ENCODE measurements at regions of chr18 and their contacts with region 1.

Region 1: DNA sequence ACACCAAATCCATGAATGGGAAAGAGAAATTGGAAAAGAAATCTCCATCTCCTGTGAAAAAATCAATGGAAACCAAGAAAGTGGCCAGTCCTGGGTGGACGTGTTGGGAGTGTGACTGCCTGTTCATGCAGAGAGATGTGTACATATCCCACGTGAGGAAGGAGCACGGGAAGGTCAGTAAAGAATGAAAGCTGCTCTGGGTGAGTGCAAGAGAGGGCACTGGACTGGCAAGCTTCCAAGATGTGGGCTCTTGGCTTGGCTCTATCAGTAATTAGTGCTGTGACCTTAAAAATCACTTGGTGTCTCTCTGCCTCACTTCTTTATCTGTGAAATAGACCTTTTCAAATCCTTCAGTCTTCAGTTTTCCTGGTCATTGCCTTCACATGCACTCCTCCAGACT is 89.0 kb downstream of the ZNF532 start:
- DNase-seq: no peak
- H3K4me3 ChIP-seq: no peak overlapping the region
- H3K27ac ChIP-seq: peak overlapping the region in 9 of 59 donors; percentile 1 to 49 (median 20)
- H3K27me3 ChIP-seq: no peaks in the 10 kb centered on the region
- CTCF ChIP-seq: no peak

Region 2: DNA sequence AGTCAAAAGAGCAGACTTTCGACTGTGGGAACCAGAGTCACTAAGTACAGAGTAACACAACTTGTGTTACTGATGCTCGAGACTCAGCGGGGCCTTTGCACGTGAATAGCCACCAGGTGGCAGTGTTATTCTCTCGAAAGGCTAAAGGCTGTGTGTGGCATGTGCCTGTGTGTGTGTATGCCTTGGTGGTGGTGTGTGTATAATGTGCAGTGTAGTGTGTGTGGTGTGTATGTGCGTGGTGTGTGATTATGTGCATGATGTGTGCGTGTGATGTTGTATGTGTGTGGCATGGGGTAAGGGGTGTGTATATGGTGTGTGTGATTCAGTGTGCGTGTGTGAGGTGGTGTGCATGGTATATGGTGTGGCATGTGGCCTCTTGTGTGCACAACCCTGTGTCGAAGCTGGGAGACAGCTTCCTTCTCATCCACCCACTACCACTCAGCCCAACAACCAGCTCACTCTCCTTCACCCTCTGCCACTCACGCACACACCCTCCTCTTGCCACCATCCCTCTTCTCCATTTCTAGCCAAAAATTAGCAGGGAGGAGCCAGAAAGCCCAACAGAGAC is 171.9 kb before region 1 on chr18:
- intact Hi-C with region 1: loop called in 1 of 2 experiments (anchors 10 kb)
- DNase-seq: peak; percentile 75 to 96 (median 86)
- H3K4me3 ChIP-seq: no peak overlapping the region
- H3K27ac ChIP-seq: peak overlapping the region in 3 of 59 donors; percentile 8 to 31 (median 18)
- H3K27me3 ChIP-seq: no peaks in the 10 kb centered on the region
- CTCF ChIP-seq: peak; percentile 86 to 99 (median 97)